Calu3 (cell line): ENCODE measurements at regions of chr4 and their contacts with region 1.

Region 1: GRCh38 chr4:168847771-168848511 is 162.1 kb downstream of the CBR4 start:
- DNase-seq: no peak
- H3K4me3 Mint-ChIP-seq: peak overlapping the region; percentile 47
- H3K27ac Mint-ChIP-seq: peak overlapping the region; percentile 17
- H3K4me1 Mint-ChIP-seq: peaks cover 16% of the 10 kb centered on the region
- H3K27me3 Mint-ChIP-seq: no peaks in the 10 kb centered on the region
- CTCF ChIP-seq: no peak

Region 2: GRCh38 chr4:168666531-168666930 is 181.4 kb before region 1 on chr4:
- CTCF ChIA-PET with region 1: no interaction called
- intact Hi-C with region 1: no loop called
- DNase-seq: no peak
- H3K4me3 Mint-ChIP-seq: no peak overlapping the region
- H3K27ac Mint-ChIP-seq: no peak overlapping the region
- H3K4me1 Mint-ChIP-seq: no peaks in the 10 kb centered on the region
- H3K27me3 Mint-ChIP-seq: no peaks in the 10 kb centered on the region
- CTCF ChIP-seq: no peak

Region 3: DNA sequence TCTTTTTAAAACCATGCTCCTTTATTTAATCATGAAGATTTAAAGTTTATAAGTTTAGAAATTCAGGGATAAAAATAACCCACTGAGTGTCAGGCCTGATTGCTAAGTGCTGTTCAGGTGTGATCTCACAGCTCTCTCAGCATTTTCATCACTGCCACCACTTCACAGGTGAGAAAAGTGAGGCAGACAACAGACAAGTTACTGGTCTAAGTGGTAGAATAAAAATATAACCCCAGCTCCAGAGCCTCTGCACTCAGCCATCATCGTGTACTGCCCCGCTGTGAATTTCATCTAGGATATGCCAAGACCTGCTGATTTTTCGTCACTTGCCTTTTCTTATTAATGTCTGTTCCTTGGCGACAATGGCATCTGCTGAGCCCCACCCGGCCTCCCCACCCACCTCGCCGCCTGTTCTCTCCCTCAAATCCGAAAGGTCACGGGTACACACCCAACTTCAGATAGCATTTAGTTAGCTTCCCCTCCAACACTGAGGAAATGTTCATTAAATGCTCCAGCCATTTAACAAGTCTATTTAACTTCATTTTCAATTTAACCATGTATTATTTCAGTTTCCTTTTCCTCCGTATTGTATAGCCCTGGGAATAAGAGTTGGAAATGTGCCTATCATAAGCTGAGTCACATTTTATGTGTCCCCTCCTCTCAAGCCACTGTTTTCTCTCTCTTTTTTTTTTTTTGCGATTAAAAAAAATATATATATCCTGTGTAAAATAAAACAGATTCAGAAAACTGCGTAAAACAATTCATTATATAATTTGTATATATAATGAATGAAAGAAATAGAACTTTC is 74.3 kb before region 1 on chr4:
- CTCF ChIA-PET with region 1: no interaction called
- intact Hi-C with region 1: loop called (anchors 5 kb)
- DNase-seq: no peak
- H3K4me3 Mint-ChIP-seq: no peak overlapping the region
- H3K27ac Mint-ChIP-seq: no peak overlapping the region
- H3K4me1 Mint-ChIP-seq: peaks cover 25% of the 10 kb centered on the region
- H3K27me3 Mint-ChIP-seq: no peaks in the 10 kb centered on the region
- CTCF ChIP-seq: no peak